Panc1 (cell line): ENCODE measurements at regions of chr6 and their contacts with region 1.

Region 1: DNA sequence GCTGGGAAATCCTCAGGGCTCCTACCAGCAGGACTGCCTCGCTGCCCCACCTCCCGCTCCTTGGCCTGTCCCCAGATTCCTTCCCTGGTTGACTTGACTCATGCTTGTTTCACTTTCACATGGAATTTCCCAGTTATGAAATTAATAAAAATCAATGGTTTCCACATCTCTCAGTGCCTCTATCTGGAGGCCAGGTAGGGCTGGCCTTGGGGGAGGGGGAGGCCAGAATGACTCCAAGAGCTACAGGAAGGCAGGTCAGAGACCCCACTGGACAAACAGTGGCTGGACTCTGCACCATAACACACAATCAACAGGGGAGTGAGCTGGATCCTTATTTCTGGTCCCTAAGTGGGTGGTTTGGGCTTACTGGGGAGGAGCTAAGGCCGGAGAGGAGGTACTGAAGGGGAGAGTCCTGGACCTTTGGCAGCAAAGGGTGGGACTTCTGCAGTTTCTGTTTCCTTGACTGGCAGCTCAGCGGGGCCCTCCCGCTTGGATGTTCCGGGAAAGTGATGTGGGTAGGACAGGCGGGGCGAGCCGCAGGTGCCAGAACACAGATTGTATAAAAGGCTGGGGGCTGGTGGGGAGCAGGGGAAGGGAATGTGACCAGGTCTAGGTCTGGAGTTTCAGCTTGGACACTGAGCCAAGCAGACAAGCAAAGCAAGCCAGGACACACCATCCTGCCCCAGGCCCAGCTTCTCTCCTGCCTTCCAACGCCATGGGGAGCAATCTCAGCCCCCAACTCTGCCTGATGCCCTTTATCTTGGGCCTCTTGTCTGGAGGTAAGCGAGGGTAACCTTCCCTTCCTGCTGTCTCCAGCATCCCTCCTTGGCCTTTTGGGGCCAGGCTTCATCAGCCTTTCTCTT is at the start of gene CFB:
- DNase-seq: no peak
- ATAC-seq: peak; percentile 68
- H3K4me3 ChIP-seq: peak within 1 kb of the TSS in 1 of 2 experiments; percentile 24; a peak in 1 of 4 replicates
- H3K27ac ChIP-seq: peak within 1 kb of the TSS; percentile 37; the same call in 1 of the 2 replicates
- H3K4me1 ChIP-seq: peaks cover 9% of the 10 kb centered on the region
- H3K27me3 ChIP-seq: no peaks in the 10 kb centered on the region
- CTCF ChIP-seq: no peak
- total RNA-seq, gene CFB: 5.6 TPM

Region 2: GRCh38 chr6:31920811-31921210 is 24.9 kb before region 1 on chr6:
- CTCF ChIA-PET with region 1: no interaction called
- POLR2A ChIA-PET with region 1: interaction called, 15 read pairs
- in situ Hi-C with region 1: no loop called
- intact Hi-C with region 1: no loop called
- DNase-seq: no peak
- ATAC-seq: no peak
- H3K4me3 ChIP-seq: no peak overlapping the region
- H3K27ac ChIP-seq: no peak overlapping the region
- H3K4me1 ChIP-seq: no peaks in the 10 kb centered on the region
- H3K27me3 ChIP-seq: no peaks in the 10 kb centered on the region
- CTCF ChIP-seq: no peak